HEK293 (cell line): ENCODE measurements at regions of chr20 and their contacts with region 1.

Region 1: GRCh38 chr20:47663333-47664067 is 121.8 kb downstream of the SULF2 start:
- H3K4me3 ChIP-seq: no peak overlapping the region
- H3K27ac ChIP-seq: no peak overlapping the region
- H3K4me1 ChIP-seq: no peaks in the 10 kb centered on the region
- CTCF ChIP-seq: peak; percentile 87

Region 2: DNA sequence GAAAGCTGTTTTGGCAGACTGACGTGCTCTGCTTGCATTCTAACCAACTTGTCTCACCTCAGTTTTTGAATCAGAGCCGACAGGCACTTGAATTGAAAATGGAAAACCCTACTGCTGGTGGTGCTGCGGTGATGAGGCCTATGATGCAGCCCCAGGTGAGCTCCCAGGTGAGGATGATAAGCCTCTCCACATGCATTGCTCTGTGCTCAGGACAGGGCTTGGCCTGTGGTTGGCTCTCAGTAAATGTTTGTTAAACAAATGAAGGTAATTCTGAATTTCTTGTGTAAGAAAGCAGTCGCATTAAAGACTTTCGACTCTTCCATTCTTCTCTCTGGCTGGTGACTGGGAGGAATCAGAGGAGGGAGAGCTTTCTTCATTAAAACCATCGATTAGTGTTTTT is 14.6 kb before region 1 on chr20:
- CTCF ChIA-PET with region 1: interaction called, 10 read pairs
- POLR2A ChIA-PET with region 1: no interaction called
- H3K4me3 ChIP-seq: no peak overlapping the region
- H3K27ac ChIP-seq: no peak overlapping the region
- H3K4me1 ChIP-seq: no peaks in the 10 kb centered on the region
- CTCF ChIP-seq: no peak

Region 3: DNA sequence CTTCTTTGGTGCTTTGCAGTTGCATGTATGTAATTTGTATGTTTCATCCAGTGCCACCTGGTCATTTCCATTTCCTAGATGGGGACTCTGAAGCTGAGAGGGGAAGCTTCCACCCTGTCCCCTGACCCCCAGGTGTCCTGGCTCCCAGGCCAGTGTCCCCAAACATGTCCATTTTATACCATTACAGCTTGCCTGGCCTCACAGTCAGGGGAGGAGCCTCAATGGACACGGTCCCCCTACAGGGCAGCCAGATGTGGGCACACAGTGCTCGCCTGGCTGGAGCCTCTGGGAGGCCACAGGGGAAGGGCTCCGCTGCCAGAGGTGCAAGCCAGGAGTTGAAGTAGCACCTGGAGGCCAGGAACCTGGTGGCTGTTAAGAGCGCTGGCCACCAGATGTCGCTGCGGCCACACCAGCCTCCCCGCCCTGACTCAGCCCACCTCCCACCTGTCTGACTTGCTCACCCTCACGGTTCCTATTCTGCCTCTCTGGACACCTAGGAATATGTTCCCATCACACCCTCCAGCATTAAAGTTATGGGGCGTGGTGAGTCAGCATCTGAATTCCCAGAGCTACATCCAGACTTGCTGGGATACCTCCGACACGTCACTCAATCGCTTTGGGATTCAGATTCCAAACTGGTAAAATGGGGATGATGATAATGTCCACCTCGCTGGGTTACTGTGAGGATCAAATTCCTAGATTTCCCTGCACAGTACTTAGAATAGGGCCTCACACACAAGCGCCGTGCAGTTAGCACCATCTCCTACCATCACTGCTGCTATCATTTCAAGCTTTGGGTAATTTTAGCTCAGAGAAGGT is 14.3 kb after region 1 on chr20:
- CTCF ChIA-PET with region 1: interaction called, 10 read pairs
- POLR2A ChIA-PET with region 1: no interaction called
- H3K4me3 ChIP-seq: no peak overlapping the region
- H3K27ac ChIP-seq: no peak overlapping the region
- H3K4me1 ChIP-seq: no peaks in the 10 kb centered on the region
- CTCF ChIP-seq: peak; percentile 73

Region 4: GRCh38 chr20:48295445-48295963 is 632.0 kb after region 1 on chr20:
- CTCF ChIA-PET with region 1: interaction called, 11 read pairs
- POLR2A ChIA-PET with region 1: no interaction called
- H3K4me3 ChIP-seq: no peak overlapping the region
- H3K27ac ChIP-seq: no peak overlapping the region
- H3K4me1 ChIP-seq: peaks cover 10% of the 10 kb centered on the region
- CTCF ChIP-seq: 0 out of 2 replicates have a peak, but pooled peaks have one; percentile 12